MCF 10A (cell line): ENCODE measurements at regions of chr3 and their contacts with region 1.

Region 1: DNA sequence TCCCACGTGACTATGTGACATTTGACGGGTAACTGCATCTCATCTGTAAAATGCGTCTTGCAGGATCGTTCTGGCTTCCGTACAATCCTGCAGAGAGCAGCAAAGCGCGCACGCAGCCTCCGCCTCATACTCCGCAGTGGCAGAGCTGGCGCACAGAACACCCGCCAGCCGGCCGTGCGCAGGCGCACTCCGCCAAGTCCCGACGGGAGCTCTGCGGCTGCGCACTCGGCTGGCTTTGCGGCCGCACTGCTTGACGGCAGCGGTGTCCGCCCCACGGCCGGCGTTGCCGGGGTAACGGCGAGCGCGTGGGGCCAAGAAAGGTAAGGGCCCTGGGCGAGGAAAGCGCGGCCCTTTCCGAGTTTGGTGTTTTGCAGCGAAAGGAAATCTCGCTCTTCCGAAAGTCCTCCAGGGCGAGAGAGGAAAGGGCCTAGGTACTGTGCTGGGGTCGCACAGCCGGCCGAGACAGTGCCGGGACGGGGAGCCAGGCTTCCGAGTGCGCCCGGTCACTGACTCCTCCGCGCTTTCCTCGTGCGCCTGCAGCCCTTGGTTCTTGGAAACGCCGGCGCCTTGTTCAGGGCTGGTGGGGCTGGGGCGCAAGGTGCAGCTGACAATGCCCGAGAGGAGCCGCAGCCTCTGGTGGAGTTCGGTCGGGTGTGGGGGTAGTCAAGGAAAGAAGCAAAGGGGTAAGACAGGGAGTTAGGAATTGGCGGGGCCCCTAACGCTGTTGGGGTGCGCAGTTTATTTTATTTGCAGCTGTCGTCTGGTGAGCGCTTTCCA is at the start of gene TSEN2:
- DNase-seq: peak; percentile 92
- H3K4me3 Mint-ChIP-seq: peak within 1 kb of the TSS; percentile 92
- H3K27ac Mint-ChIP-seq: peak within 1 kb of the TSS; percentile 84
- H3K4me1 Mint-ChIP-seq: peaks cover 15% of the 10 kb centered on the region
- H3K27me3 Mint-ChIP-seq: no peaks in the 10 kb centered on the region
- CTCF ChIP-seq: peak; percentile 15
- total RNA-seq, gene TSEN2: 24.5 and 32.3 TPM in 2 replicates

Region 2: DNA sequence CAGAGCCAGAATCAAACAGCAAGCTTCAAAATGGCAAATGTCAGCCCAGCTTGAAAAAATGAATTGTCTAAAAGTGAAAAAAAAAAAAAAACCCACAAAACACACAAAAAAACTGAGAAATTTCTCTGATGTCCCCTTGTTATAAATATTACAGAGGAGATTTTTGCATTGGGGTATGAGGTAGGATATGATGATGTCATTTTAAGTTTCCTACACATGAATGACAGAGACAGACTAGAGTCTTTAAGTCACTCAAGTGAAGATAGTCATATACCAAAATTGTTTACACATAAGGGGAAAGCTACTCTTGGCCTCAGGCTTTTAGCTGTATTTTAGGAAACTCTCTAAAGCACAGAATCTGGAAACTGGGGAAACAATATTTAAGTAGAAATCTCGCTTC is 358.6 kb before region 1 on chr3:
- CTCF ChIA-PET with region 1: interaction called, 246 read pairs
- POLR2A ChIA-PET with region 1: no interaction called
- intact Hi-C with region 1: no loop called
- DNase-seq: no peak
- H3K4me3 Mint-ChIP-seq: no peak overlapping the region
- H3K27ac Mint-ChIP-seq: no peak overlapping the region
- H3K4me1 Mint-ChIP-seq: peaks cover 3% of the 10 kb centered on the region
- H3K27me3 Mint-ChIP-seq: peaks cover 35% of the 10 kb centered on the region
- CTCF ChIP-seq: no peak

Region 3: GRCh38 chr3:12175844-12176453 is 308.4 kb before region 1 on chr3:
- CTCF ChIA-PET with region 1: interaction called, 156 read pairs
- POLR2A ChIA-PET with region 1: interaction called, 13 read pairs
- intact Hi-C with region 1: loop called (anchors 1 kb)
- DNase-seq: peak; percentile 72
- H3K4me3 Mint-ChIP-seq: no peak overlapping the region
- H3K27ac Mint-ChIP-seq: no peak overlapping the region
- H3K4me1 Mint-ChIP-seq: peaks cover 24% of the 10 kb centered on the region
- H3K27me3 Mint-ChIP-seq: no peaks in the 10 kb centered on the region
- CTCF ChIP-seq: peak; percentile 78

Region 4: DNA sequence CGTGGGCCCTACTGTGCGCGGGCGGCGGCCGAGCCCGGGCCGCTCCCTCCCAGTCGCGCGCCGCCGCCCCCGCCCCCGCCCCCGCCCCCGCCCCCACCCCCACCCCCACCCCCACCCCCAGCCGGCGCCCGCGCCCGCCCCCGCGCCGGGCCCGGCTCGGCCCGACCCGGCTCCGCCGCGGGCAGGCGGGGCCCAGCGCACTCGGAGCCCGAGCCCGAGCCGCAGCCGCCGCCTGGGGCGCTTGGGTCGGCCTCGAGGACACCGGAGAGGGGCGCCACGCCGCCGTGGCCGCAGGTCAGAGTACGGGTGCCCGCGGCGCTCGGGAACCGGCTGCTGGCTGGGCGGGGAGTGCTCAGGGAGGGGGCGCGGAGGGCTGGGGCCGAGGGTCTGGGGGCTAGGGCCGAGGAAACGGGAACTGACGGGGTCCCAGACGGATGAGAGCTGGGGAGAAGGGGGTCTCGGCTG is 196.6 kb before region 1 on chr3:
- CTCF ChIA-PET with region 1: interaction called, 3 read pairs
- POLR2A ChIA-PET with region 1: no interaction called
- intact Hi-C with region 1: loop called (anchors 2 kb)
- DNase-seq: peak; percentile 42
- H3K4me3 Mint-ChIP-seq: peak overlapping the region; percentile 70
- H3K27ac Mint-ChIP-seq: no peak overlapping the region
- H3K4me1 Mint-ChIP-seq: peaks cover 5% of the 10 kb centered on the region
- H3K27me3 Mint-ChIP-seq: no peaks in the 10 kb centered on the region
- CTCF ChIP-seq: no peak

Region 5: DNA sequence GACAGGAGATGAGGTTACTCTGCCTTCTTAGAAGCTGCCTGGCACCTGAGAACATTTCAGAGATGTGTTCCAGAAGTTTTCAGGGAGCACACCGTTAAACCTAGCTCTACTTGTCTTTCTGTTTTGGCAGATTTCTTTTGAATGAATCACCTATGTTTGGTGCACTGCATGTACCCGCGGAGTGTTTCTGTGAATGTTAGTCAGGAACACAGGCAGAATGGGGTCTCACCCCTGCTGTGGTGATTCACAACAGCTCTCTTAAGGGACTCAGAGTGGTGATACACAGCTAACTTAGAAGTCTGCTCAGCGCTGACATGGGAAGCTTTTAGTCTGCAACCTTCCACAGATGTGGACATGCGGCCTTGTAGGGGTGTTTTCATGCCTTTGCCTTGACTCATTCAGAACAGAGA is 23.9 kb after region 1 on chr3:
- CTCF ChIA-PET with region 1: interaction called, 14 read pairs
- POLR2A ChIA-PET with region 1: interaction called, 71 read pairs
- intact Hi-C with region 1: no loop called
- DNase-seq: peak; percentile 91
- H3K4me3 Mint-ChIP-seq: peak overlapping the region; percentile 69
- H3K27ac Mint-ChIP-seq: peak overlapping the region; percentile 93
- H3K4me1 Mint-ChIP-seq: peaks cover 23% of the 10 kb centered on the region
- H3K27me3 Mint-ChIP-seq: no peaks in the 10 kb centered on the region
- CTCF ChIP-seq: no peak

Region 6: DNA sequence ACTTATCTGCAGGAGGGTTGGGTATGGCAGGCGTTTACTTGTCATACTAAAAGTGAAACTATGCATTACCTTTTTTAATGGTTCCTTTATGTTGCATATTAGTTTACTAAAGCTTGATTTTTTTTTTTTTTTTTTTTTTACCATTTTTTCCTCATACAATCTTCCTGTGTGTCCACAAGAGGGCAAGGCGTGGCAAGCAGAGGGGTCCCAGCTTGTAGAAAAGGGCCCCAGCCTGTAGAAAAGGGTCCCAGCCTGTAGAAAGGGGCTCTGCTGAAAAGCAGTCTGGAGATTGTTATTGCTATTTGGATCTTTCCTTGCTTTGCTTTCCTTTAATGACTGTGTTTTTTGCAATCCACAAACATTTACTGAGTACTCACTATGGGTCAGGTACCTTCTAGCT is 94.4 kb after region 1 on chr3:
- CTCF ChIA-PET with region 1: no interaction called
- POLR2A ChIA-PET with region 1: no interaction called
- intact Hi-C with region 1: no loop called
- DNase-seq: no peak
- H3K4me3 Mint-ChIP-seq: no peak overlapping the region
- H3K27ac Mint-ChIP-seq: no peak overlapping the region
- H3K4me1 Mint-ChIP-seq: no peaks in the 10 kb centered on the region
- H3K27me3 Mint-ChIP-seq: no peaks in the 10 kb centered on the region
- CTCF ChIP-seq: peak; percentile 10

Region 7: DNA sequence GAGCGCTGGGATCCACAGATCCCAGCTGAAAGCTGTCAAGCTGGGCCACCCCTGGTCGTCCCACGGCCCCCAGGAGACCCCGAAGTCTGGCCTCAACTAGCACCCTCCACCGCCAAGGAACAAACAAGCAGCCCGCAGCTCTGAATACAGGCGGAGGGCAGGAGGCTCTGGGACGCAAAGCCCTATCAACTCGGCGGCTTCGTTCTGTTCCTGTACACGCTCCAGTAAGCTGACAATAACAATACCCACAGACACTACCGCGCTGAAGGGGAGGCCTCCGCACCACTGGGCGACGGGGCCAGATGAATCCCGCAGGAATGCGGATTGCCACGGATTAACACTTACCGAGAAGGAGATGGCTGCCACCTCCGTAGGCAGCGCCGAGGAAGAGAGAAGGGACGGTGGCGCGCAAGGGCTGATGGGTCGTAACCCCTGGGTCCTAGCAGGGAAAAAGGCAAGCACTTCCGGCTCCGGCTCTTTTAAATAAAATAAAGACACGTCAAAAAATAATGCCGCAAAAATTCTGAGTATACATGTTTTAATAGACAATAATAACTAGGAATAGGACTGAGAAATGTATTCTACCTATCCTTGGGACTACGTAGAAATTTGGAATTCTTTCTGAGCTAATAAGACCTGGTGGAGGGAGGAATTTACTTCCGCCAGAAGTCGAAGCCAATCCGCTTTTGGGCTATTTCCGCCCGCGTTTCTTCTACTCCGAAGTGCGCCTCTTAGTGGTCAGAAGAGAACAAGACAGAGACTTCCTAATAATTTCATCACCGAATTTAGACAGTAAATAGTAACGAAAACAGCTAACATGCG is 357.0 kb after region 1 on chr3 and contains the start of gene RPL32:
- CTCF ChIA-PET with region 1: no interaction called
- POLR2A ChIA-PET with region 1: interaction called, 4 read pairs
- intact Hi-C with region 1: loop called (anchors 1 kb)
- DNase-seq: peak; percentile 95
- H3K4me3 Mint-ChIP-seq: peak within 1 kb of the TSS; percentile 96
- H3K27ac Mint-ChIP-seq: peak within 1 kb of the TSS; percentile 100
- H3K4me1 Mint-ChIP-seq: peaks cover 25% of the 10 kb centered on the region
- H3K27me3 Mint-ChIP-seq: no peaks in the 10 kb centered on the region
- CTCF ChIP-seq: peak; percentile 58
- total RNA-seq, gene RPL32: 2,288 and 2,498 TPM in 2 replicates